Right ventricle myocardium inferior (tissue), 1 donor: ENCODE measurements at regions of chr6 and their contacts with region 1.

Region 1: DNA sequence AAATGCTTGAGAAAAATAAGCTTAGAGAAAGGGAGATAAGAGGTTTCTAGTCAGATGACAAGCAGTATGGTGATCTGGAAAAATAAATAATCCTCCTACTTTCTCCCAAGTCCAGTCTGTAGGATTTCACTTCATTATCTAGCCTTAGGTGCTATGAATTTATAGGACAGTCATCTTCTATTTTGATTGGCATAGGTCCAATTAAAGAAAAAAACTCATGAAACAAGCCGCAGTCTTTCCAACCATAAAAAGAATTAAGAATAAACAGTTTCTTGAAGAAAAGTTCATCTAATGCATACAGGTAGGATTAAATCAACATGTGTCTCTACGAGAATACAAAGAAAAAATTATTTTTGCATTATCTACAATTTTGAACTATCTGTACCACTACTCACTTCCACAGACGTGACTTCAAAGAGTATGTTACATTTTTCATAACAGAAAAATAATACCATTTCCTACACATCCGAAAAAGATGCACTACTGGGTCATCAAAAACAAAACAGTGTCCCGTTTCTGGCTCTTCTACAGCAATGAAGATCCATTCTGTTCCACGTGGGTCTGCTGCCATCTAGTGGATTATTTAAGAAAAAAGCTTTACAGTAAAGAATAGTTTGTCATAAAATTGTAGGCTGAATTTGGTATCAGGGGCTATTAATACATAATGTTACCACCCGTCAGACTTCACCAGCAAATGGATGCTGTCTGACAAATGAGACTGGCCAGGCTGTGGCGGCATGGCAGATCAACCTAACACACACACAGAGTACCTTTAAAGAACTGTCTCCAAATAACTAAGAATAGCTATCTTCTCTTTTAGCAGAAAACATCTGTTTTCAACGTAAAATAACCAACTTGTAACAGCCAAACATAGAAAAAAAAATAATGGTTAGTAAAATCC is 28.9 kb downstream of the STX7 start:
- DNase-seq: no peak
- ATAC-seq: peak; percentile 80

Region 2: GRCh38 chr6:132279592-132280139 is 204.4 kb before region 1 on chr6:
- intact Hi-C with region 1: loop called (anchors 5 kb)
- DNase-seq: peak; percentile 85
- ATAC-seq: peak; percentile 80

Region 3: DNA sequence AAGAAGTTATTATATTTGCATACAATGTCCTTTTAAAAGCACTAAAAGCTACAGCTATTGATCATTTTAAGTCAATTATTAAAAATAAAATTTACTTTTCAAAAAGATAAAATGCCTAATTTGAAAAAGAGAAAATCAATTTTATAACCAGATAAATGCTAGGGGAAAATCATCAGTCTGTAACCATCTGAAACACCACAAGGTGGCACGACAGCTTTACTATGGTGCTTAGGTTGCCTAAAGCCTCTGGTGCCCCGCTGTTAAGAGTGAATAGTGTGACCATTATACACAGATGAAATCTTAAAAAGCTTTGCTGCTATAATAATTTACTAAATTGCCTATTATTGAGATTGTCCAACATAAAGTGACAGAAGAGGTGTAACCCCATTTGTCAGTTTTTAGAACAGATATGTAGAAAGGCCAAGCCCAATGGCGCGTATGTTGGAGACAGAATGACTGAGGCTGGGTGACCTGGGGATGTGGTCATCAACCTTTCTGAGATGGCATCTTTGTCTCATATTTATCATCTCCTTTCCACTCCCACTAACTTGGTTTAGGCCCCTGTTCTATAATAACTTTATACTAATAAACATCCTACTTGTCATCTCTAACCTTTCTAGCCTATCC is 183.6 kb before region 1 on chr6:
- intact Hi-C with region 1: loop called (anchors 2 kb)
- DNase-seq: no peak
- ATAC-seq: no peak